AG04450 (cell line): ENCODE measurements at regions of chr10 and their contacts with region 1.

Region 1: DNA sequence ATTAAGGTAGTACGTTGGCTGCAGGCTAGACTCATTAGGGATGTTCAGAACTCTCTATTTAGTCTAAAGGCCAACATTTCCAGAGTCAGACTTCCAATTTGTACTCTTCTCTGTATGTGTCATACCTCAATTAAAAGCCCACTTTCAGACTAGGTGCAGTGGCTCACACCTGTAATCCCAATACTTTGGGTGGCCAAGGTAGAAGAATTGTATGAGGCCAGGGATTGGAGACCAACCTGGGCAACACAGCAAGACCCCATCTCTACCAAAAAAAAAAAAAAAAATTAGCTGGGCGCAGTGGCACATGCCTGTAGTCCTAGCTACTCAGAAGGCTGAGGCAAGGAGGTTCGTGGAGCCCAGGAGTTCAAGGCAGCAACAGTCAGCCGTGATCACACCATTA is 190.7 kb upstream of the KAT6B start:
- DNase-seq: no peak
- H3K4me3 ChIP-seq: no peak overlapping the region
- H3K27ac ChIP-seq: no peak overlapping the region
- H3K27me3 ChIP-seq: no peaks in the 10 kb centered on the region
- CTCF ChIP-seq: no peak

Region 2: GRCh38 chr10:74598891-74599566 is 36.6 kb before region 1 on chr10:
- CTCF ChIA-PET with region 1: no interaction called
- POLR2A ChIA-PET with region 1: no interaction called
- DNase-seq: no peak
- H3K4me3 ChIP-seq: no peak overlapping the region; the same call in 1 of the 2 replicates
- H3K27ac ChIP-seq: no peak overlapping the region
- H3K27me3 ChIP-seq: no peaks in the 10 kb centered on the region
- CTCF ChIP-seq: no peak

Region 3: DNA sequence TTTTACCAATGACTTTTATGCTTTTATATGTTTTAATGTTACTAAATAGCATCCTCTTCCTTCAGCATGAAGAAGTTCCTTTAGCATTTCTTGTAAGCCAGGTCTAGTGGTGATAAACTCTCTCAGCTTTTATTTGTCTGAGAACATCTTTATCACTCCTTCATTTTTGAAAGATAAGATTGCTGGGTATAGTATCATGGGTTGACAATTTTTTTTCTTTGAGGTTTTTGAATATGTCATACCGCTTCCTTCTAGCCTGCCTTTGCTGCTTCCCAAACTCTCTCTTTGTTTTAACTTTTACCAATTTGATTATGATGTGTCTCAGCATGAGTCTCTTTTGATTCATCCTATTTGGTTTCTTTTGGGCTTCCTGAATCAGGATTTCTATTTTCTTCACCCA is 82.6 kb after region 1 on chr10:
- CTCF ChIA-PET with region 1: no interaction called
- POLR2A ChIA-PET with region 1: no interaction called
- DNase-seq: no peak
- H3K4me3 ChIP-seq: no peak overlapping the region
- H3K27ac ChIP-seq: no peak overlapping the region
- H3K27me3 ChIP-seq: no peaks in the 10 kb centered on the region
- CTCF ChIP-seq: no peak

Region 4: GRCh38 chr10:74771054-74771453 is 135.4 kb after region 1 on chr10:
- CTCF ChIA-PET with region 1: no interaction called
- POLR2A ChIA-PET with region 1: interaction called, 11 read pairs
- DNase-seq: no peak
- H3K4me3 ChIP-seq: no peak overlapping the region
- H3K27ac ChIP-seq: no peak overlapping the region
- H3K27me3 ChIP-seq: no peaks in the 10 kb centered on the region
- CTCF ChIP-seq: no peak